ENCODE measurements at regions of chr3 and their contacts with region 1.

Region 1: DNA sequence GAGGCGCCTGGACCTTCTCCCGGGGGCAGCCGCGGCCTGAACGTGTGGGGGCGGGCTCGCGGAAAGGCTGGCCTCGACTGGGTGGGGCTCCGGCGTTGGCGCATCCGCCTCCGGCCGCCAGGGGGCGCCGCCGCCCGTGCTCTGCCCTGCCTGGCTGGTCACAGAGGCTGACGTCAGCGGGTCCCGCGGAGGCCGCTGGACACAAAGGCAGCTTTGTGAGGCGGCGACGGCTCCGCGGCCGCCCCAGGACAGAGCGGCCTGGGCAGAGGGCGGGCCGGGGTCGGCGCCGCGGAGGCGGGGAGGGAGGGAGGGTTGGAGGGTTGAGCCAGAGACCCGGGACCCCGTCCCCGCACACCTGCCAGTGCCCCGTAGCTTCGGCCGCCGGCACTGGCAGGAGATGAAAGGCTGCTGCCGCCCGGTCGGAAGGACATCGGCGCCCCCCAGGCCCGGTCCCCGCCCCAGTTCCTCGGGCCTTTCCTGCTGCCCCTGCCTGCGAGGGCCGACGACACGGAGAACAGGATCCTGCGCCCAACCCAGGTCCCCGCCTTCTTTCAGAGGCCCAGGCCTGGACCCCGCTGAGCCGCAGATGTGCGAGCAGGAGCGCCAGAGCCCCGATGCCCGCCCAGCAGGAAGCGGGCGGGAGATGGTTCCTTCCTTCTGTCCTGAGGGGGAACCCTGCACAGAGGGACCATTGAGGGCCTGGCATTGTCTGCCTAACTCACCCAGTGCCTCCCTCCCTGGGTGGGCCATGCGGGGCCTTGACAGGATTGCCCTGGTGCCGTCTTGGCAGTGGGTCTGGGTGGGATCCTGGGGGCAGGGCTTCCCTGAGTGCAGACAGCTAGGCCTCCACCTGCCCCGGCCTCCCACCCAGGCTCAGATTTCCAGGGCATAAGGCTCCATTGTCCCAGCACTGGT is 8.7 kb upstream of the SEMA3B start:
- DNase-seq: peak; percentile 94
- ATAC-seq: peak; percentile 83
- H3K4me3 ChIP-seq: peak overlapping the region; percentile 63
- H3K27ac ChIP-seq: peak overlapping the region; percentile 58
- H3K4me1 ChIP-seq: peaks cover 21% of the 10 kb centered on the region
- H3K27me3 ChIP-seq: no peaks in the 10 kb centered on the region
- CTCF ChIP-seq: peak; percentile 87

Region 2: GRCh38 chr3:49454458-49454857 is 805.8 kb before region 1 on chr3:
- CTCF ChIA-PET with region 1: no interaction called
- POLR2A ChIA-PET with region 1: no interaction called
- intact Hi-C with region 1: no loop called
- DNase-seq: peak; percentile 66
- ATAC-seq: peak; percentile 89
- H3K4me3 ChIP-seq: no peak overlapping the region
- H3K27ac ChIP-seq: no peak overlapping the region
- H3K4me1 ChIP-seq: 0 out of 2 replicates have a peak, but pooled peaks cover 4% of the 10 kb centered on the region
- H3K27me3 ChIP-seq: no peaks in the 10 kb centered on the region
- CTCF ChIP-seq: peak; percentile 65

Region 3: DNA sequence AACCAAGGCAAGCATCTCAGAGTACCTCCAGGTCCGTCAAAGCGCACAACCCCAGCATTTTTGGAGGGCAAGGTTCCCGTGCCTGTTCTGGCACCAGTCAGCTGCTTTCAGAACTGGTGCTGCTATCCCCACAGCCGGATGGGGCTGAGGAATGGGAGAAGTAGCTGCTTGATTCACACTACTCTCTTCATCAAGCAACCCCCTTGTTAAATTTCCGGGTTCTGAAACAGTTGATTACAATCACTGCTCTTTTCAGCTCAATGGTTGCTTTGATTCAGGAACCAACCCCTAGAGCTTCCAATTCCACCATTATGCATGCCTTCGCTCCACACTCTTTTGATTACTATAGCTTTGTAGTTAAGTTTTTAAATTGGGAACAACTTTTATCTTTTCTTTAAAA is 434.3 kb before region 1 on chr3:
- CTCF ChIA-PET with region 1: no interaction called
- POLR2A ChIA-PET with region 1: no interaction called
- intact Hi-C with region 1: no loop called
- DNase-seq: no peak
- ATAC-seq: no peak
- H3K4me3 ChIP-seq: no peak overlapping the region
- H3K27ac ChIP-seq: no peak overlapping the region
- H3K4me1 ChIP-seq: no peaks in the 10 kb centered on the region
- H3K27me3 ChIP-seq: no peaks in the 10 kb centered on the region
- CTCF ChIP-seq: no peak

Region 4: GRCh38 chr3:50095352-50095998 is 164.8 kb before region 1 on chr3:
- CTCF ChIA-PET with region 1: no interaction called
- POLR2A ChIA-PET with region 1: interaction called, 10 read pairs
- intact Hi-C with region 1: no loop called
- DNase-seq: peak; percentile 40
- ATAC-seq: peak; percentile 91
- H3K4me3 ChIP-seq: no peak overlapping the region
- H3K27ac ChIP-seq: peak overlapping the region; percentile 6; the same call in 1 of the 2 replicates
- H3K4me1 ChIP-seq: peaks cover 13% of the 10 kb centered on the region
- H3K27me3 ChIP-seq: no peaks in the 10 kb centered on the region
- CTCF ChIP-seq: no peak

Region 5: DNA sequence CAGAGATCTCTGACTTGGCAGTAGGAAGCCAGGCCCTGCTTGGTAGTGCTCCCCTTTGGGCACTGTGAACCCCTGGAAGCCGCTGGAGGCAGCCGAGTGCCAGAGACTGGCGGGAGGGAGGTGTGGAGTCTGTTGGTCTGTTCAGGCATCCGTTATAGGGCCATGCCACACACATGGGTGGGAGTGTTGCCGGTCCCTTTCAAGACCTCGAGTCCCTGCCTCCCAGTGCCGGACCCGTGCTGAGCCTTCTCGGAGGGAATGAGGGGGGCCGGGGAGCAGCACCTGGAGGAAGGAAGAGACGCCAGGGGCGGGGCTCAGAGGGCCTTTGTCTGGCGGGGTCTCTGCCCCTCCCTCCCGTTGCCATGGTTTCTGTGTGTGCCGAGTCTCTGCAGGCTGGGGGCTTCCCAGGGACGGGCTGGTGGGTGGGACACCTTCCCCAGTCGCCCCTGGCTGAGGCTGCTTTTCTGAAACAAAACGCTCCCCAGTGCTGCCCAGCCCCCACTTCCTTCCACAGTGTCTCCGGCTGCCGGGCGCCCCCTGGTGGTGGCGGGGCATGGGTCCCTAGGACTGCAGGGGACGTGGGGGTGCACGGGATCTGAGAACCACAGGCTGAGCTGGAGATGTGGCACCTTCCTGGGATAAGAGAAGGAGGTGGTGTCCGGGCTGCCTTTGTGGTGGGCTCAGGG is 14.3 kb before region 1 on chr3:
- CTCF ChIA-PET with region 1: interaction called, 11 read pairs
- POLR2A ChIA-PET with region 1: no interaction called
- intact Hi-C with region 1: no loop called
- DNase-seq: peak; percentile 89
- ATAC-seq: peak; percentile 74
- H3K4me3 ChIP-seq: peak overlapping the region; percentile 37; the same call in 1 of the 2 replicates
- H3K27ac ChIP-seq: peak overlapping the region; percentile 78
- H3K4me1 ChIP-seq: peaks cover 49% of the 10 kb centered on the region
- H3K27me3 ChIP-seq: no peaks in the 10 kb centered on the region
- CTCF ChIP-seq: peak; percentile 99

Region 6: DNA sequence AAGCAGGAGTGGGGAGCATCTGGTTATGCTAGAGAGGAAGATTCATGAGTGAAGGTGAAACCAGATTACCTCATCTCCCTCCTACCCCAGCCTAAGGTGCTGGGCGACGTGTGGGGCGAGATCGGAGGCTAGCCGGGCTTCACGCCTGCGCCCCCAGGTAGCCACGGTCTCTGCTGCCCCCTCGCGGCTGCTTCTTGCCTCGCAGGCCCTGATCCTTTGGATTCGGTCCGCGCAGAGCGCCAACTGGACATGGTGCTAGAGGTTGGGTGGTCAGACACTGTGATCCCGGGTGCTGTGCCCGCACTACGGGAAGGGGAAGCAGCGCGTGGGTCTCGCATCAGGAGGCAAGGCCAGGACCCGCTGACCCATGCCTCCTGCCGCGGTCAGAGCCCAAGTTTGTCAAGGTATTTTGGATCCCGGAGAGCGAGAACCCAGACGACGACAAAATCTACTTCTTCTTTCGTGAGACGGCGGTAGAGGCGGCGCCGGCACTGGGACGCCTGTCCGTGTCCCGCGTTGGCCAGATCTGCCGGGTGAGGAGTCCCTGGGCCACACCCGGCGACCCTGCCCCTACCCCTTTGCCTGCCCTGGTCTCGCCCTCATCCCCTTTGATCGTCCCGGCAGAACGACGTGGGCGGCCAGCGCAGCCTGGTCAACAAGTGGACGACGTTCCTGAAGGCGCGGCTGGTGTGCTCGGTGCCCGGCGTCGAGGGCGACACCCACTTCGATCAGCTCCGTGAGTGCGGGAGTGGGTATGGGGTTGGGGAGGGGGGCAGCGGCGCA is 12.8 kb after region 1 on chr3:
- CTCF ChIA-PET with region 1: interaction called, 8 read pairs
- POLR2A ChIA-PET with region 1: no interaction called
- intact Hi-C with region 1: loop called (anchors 1 kb)
- DNase-seq: peak; percentile 92
- ATAC-seq: peak; percentile 42
- H3K4me3 ChIP-seq: peak overlapping the region; percentile 59
- H3K27ac ChIP-seq: no peak overlapping the region
- H3K4me1 ChIP-seq: peaks cover 38% of the 10 kb centered on the region
- H3K27me3 ChIP-seq: no peaks in the 10 kb centered on the region
- CTCF ChIP-seq: peak; percentile 96